CD8-positive, alpha-beta T cell (primary cell): ENCODE measurements at regions of chr11 and their contacts with region 1.

Region 1: GRCh38 chr11:81005595-81005994 is 1564.8 kb upstream of the TENM4 start:
- DNase-seq: no peak
- ATAC-seq: no peak
- H3K4me3 ChIP-seq: no peak overlapping the region
- H3K4me3 Mint-ChIP-seq: no peak overlapping the region
- H3K27ac ChIP-seq: no peak overlapping the region
- H3K27ac Mint-ChIP-seq: no peak overlapping the region
- H3K4me1 ChIP-seq: no peaks in the 10 kb centered on the region
- H3K4me1 Mint-ChIP-seq: no peaks in the 10 kb centered on the region
- H3K27me3 ChIP-seq: no peaks in the 10 kb centered on the region
- H3K27me3 Mint-ChIP-seq: no peaks in the 10 kb centered on the region
- CTCF ChIP-seq: no peak

Region 2: DNA sequence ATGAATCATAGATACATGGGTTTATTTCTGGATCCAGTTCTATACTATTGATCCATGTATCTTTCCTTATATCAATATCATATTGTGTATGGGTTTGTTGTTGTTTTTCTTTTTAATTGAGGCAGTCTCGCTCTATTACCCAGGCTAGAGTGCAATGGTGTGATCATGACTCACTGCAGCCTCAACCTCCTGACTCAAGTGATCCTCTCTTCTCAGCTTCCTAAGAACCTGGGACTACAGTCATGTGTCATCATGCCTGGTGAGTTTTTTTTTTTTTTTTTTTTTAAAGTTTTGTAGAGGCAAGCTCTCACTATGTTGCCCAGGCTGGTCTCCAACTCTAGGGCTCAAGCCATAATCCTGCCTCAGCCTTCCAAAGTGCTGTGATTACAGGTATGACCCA is 24.6 kb after region 1 on chr11:
- CTCF ChIA-PET with region 1: no interaction called
- POLR2A ChIA-PET with region 1: no interaction called
- intact Hi-C with region 1: loop called in 1 of 2 experiments (anchors 2 kb)
- DNase-seq: no peak
- ATAC-seq: no peak
- H3K4me3 ChIP-seq: no peak overlapping the region
- H3K4me3 Mint-ChIP-seq: no peak overlapping the region
- H3K27ac ChIP-seq: no peak overlapping the region
- H3K27ac Mint-ChIP-seq: no peak overlapping the region
- H3K4me1 ChIP-seq: no peaks in the 10 kb centered on the region
- H3K4me1 Mint-ChIP-seq: no peaks in the 10 kb centered on the region
- H3K27me3 ChIP-seq: no peaks in the 10 kb centered on the region
- H3K27me3 Mint-ChIP-seq: no peaks in the 10 kb centered on the region
- CTCF ChIP-seq: no peak